CD8-positive, alpha-beta memory T cell (primary cell): ENCODE measurements at regions of chr6 and their contacts with region 1.

Region 1: DNA sequence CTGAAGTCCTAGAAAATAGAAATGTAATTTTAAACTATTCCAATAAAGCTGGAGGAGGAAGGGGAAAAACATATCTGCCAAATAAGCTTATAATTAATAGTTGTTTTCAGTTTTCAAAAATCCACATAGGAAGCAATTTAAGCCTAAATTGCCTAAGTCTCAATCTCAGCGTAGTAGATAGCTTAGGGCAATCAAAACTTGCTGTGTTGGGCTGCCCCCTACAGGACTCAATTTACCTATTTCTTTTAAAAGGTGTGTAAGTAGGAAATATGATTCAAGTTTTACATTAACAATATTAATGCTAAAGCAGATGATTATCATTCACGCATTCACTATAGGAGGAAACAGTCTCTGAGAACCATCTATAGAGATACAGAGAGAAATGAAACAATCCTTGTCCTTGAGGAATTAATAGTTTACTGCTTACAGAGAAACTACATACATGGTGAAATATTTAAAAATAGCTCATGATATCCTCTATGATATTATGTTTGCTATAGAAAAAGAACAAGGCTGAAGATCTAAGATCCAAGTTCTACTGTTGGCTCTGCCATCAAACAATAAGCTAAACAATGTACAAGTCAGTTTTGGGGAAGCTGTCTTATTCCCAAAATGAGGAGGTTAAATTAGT is 102.1 kb downstream of the ATG5 start:
- DNase-seq: peak; percentile 55 to 79 (median 58)
- H3K4me3 ChIP-seq: no peak overlapping the region
- H3K4me3 Mint-ChIP-seq: no peak overlapping the region
- H3K27ac ChIP-seq: no peak overlapping the region
- H3K27ac Mint-ChIP-seq: peak overlapping the region in 3 of 8 donors; percentile 25 to 63 (median 25)
- H3K4me1 ChIP-seq: no peaks in the 10 kb centered on the region
- H3K4me1 Mint-ChIP-seq: peaks cover 18 to 52% (median 26%) of the 10 kb centered on the region in 3 donors
- H3K27me3 ChIP-seq: no peaks in the 10 kb centered on the region
- H3K27me3 Mint-ChIP-seq: no peaks in the 10 kb centered on the region

Region 2: DNA sequence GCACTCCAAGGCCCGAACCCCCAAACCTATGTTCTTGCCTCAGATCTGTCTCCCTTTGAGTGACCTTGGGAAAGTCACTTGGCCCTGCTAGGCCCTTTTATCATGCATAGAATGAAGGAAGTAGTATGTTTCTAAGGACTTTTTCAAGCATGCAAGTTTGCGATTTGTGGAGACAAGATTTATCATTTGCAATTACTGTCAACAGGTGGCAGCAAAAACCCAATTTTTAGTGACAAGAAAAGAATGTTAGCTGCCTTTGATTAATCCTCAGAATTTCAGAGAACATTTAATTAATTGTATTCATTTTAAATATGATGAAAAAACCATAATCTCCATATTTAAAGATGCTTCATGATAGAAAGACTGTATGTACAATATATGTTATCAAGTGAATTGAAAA is 792.2 kb before region 1 on chr6:
- CTCF ChIA-PET with region 1: interaction called, 25 read pairs
- POLR2A ChIA-PET with region 1: no interaction called
- DNase-seq: peak in 2 of 5 donors; percentile 36 to 40
- H3K4me3 ChIP-seq: no peak overlapping the region
- H3K4me3 Mint-ChIP-seq: no peak overlapping the region
- H3K27ac ChIP-seq: no peak overlapping the region
- H3K27ac Mint-ChIP-seq: peak overlapping the region in 1 of 8 donors; percentile 18
- H3K4me1 ChIP-seq: no peaks in the 10 kb centered on the region
- H3K4me1 Mint-ChIP-seq: no peaks in the 10 kb centered on the region
- H3K27me3 ChIP-seq: no peaks in the 10 kb centered on the region
- H3K27me3 Mint-ChIP-seq: no peaks in the 10 kb centered on the region

Region 3: DNA sequence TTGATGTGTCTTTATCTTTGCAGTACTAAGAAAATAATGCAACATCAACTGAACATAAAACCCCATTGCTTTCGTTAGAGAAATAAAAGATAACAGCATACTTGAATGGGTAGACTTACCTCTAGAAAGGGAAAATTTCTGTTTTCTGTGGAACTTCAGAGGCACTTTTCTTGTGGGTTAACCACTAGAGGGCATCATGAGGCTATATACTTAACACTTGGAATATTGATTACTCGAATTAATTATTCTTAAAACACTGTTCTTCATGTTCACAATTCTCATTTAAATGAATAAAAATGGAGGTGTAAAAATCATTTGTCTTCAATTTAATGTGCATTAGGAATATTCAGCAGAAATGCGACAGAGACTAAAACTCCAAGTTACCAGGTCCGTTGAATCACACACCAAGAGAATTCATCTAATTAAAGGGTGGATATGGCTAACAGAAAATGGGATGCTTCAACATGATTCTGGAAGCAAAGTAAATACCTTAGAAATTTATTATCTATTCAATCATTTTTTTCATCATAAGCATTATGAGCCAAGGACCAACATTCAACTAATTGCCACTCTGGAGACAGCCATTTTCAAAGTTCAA is 489.8 kb before region 1 on chr6:
- CTCF ChIA-PET with region 1: interaction called, 10 read pairs
- POLR2A ChIA-PET with region 1: no interaction called
- DNase-seq: peak in 2 of 5 donors; percentile 11 to 15
- H3K4me3 ChIP-seq: no peak overlapping the region
- H3K4me3 Mint-ChIP-seq: no peak overlapping the region
- H3K27ac ChIP-seq: no peak overlapping the region
- H3K27ac Mint-ChIP-seq: no peak overlapping the region
- H3K4me1 ChIP-seq: no peaks in the 10 kb centered on the region
- H3K4me1 Mint-ChIP-seq: peaks cover 10 to 26% (median 22%) of the 10 kb centered on the region in 3 donors
- H3K27me3 ChIP-seq: no peaks in the 10 kb centered on the region
- H3K27me3 Mint-ChIP-seq: no peaks in the 10 kb centered on the region

Region 4: DNA sequence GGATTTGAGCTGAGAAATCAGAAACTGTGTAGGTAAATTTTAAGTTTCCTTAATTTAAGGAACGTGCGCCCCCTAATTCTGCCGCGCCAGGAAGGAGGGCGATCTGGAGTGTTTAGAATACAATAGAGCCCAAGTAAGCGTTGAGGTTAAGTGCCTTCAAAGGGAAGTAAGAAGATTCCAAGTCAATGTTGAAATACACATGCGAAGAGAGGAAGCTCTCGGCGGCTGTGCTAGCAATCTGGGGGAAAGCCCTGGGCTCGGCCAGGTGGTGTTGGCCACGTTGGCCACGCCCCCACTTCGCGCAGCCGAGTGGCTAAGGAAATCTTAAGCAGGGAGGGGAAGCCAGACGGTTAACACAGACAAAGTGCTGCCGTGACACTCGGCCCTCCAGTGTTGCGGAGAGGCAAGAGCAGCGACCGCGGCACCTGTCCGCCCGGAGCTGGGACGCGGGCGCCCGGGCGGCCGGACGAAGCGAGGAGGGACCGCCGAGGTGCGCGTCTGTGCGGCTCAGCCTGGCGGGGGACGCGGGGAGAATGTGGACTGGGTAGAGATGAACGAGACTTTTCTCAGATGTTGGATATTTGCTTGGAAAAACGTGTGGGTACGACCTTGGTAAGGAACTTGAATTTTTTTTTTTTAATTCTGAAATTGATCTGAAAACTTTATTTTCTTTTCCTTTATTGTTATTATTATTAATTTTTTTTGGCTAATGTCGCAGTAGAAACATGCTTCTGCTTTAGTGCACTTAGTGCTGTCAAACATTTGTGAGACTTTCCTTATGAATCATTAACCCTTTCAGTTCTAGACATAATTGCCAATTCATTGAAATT is 137.2 kb before region 1 on chr6 and contains the start of gene PRDM1:
- CTCF ChIA-PET with region 1: interaction called, 49 read pairs
- POLR2A ChIA-PET with region 1: interaction called, 3 read pairs
- DNase-seq: peak; percentile 52 to 88 (median 81)
- H3K4me3 ChIP-seq: peak within 1 kb of the TSS; percentile 61
- H3K4me3 Mint-ChIP-seq: peak within 1 kb of the TSS; percentile 90 to 97 (median 93)
- H3K27ac ChIP-seq: peak within 1 kb of the TSS; percentile 52
- H3K27ac Mint-ChIP-seq: peak within 1 kb of the TSS; percentile 61 to 97 (median 92)
- H3K4me1 ChIP-seq: peaks cover 66% of the 10 kb centered on the region
- H3K4me1 Mint-ChIP-seq: peaks cover 80 to 94% (median 93%) of the 10 kb centered on the region in 3 donors
- H3K27me3 ChIP-seq: no peaks in the 10 kb centered on the region
- H3K27me3 Mint-ChIP-seq: peaks cover 0 to 4% of the 10 kb centered on the region in 2 donors
- total RNA-seq, gene PRDM1: 88.2 to 90.7 TPM

Region 5: GRCh38 chr6:106117579-106117978 is 105.8 kb before region 1 on chr6:
- CTCF ChIA-PET with region 1: interaction called, 25 read pairs
- POLR2A ChIA-PET with region 1: no interaction called
- DNase-seq: peak; percentile 59 to 84 (median 80)
- H3K4me3 ChIP-seq: no peak overlapping the region
- H3K4me3 Mint-ChIP-seq: peak overlapping the region; percentile 6 to 85 (median 68)
- H3K27ac ChIP-seq: no peak overlapping the region
- H3K27ac Mint-ChIP-seq: peak overlapping the region; percentile 83 to 98 (median 93)
- H3K4me1 ChIP-seq: peaks cover 56% of the 10 kb centered on the region
- H3K4me1 Mint-ChIP-seq: peaks cover 66 to 81% (median 75%) of the 10 kb centered on the region in 3 donors
- H3K27me3 ChIP-seq: no peaks in the 10 kb centered on the region
- H3K27me3 Mint-ChIP-seq: peaks cover 0 to 1% of the 10 kb centered on the region in 2 donors

Region 6: DNA sequence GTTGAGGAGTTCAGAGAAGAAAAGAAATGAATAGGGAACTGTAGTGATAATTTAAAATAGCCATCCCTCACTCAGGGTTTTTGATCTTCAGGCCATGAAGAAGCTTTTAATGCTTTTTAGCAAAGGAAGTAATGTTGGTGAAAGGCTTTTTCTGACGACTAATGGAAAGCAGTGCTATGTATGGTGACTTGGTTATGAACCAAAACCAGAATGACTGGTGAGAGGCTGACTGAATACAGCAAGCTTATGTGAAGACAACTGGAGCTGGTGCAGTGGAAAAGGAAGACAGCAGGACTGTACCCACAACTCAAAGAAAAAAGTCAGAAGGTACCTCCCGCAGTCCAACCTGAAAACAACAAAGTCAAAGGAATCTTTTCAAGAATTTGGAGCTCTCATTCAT is 18.5 kb before region 1 on chr6:
- CTCF ChIA-PET with region 1: no interaction called
- POLR2A ChIA-PET with region 1: no interaction called
- DNase-seq: no peak
- H3K4me3 ChIP-seq: no peak overlapping the region
- H3K4me3 Mint-ChIP-seq: no peak overlapping the region
- H3K27ac ChIP-seq: no peak overlapping the region
- H3K27ac Mint-ChIP-seq: peak overlapping the region in 4 of 8 donors; percentile 1 to 56 (median 22)
- H3K4me1 ChIP-seq: no peaks in the 10 kb centered on the region
- H3K4me1 Mint-ChIP-seq: peaks cover 11 to 19% (median 17%) of the 10 kb centered on the region in 3 donors
- H3K27me3 ChIP-seq: no peaks in the 10 kb centered on the region
- H3K27me3 Mint-ChIP-seq: peaks cover 0 to 2% of the 10 kb centered on the region in 2 donors